ENCODE measurements at regions of chr2 and their contacts with region 1.

Region 1: DNA sequence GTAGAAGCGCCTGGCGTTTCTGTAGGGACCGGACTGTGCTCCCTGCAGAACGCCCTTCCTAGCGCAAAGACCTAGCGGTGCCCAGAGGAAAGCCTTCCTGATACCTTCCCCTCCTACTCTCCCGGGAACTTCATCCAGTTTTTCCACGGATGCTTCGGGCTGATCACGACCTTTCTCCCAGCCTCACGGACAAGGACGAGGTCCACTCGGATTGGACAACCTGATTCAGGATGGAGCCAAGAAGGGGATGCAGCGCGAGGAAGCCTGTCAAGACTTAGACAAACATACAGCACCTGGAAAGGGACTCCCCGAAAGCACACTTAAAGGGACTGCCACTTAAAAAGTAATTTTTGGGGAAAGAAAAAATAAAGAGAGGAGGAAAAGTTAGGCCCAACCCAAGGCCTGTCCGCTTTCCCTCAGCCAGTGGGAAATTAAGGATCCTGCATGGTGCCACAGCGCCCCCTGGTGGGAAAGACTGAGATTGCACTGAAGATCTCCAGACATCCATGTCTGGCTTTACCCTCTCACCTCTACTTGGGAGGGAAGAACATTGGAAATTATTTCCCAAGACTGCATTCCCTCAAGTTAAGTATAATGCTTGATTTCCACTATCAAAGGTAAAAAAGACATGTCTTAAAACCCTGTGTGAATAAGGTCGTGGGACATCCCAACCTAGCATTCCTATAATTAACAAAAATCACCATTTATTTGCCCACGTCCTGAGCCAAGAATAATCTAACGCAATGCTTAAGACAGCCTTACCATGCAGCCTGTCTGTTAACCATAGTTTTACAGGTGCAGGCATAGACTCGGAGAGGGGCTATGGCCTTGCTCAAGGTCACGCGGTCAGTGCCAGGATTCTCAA is 13.4 kb upstream of the COPS8 start:
- H3K4me3 Mint-ChIP-seq: no peak overlapping the region
- H3K27ac Mint-ChIP-seq: no peak overlapping the region
- H3K4me1 Mint-ChIP-seq: peaks cover 6% of the 10 kb centered on the region
- H3K27me3 Mint-ChIP-seq: no peaks in the 10 kb centered on the region

Region 2: DNA sequence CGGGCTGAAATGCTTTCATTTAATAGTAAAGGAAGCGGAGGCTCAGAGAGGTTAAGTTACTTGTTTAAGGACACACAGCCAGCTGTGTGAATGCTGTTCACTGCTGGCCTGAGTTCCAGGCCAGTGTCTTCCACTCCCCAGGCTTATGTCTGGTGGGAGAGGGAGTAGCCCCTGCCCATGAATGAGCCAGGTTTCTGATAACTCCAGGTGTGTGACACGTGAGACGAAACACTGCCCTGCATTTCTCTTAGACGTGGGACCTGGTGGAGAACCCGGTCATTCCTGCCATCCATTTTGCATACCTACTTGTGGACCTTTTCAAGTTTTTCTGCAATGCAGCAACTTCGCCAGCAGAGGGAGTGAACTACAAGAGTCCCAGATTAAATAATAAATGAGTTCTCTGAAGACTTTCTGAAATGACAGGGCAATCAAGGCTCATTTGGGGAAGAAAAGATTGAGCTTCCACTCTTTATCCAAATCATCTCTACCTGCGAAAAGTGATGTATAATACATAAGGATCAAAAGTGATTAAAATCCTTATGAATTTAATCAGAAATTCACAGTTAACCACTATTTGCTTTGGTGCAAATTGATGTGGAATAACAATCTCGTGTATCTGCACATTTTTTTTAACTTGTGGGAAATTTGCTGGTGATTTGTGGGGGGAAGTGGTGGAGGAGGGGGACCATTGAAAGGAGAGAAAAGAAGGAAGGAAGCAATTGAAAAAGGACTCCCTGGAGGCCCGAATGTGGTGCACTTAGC is 728.7 kb before region 1 on chr2:
- intact Hi-C with region 1: loop called (anchors 2 kb)
- H3K4me3 Mint-ChIP-seq: no peak overlapping the region
- H3K27ac Mint-ChIP-seq: no peak overlapping the region
- H3K4me1 Mint-ChIP-seq: peaks cover 7% of the 10 kb centered on the region
- H3K27me3 Mint-ChIP-seq: peaks cover 2% of the 10 kb centered on the region

Region 3: DNA sequence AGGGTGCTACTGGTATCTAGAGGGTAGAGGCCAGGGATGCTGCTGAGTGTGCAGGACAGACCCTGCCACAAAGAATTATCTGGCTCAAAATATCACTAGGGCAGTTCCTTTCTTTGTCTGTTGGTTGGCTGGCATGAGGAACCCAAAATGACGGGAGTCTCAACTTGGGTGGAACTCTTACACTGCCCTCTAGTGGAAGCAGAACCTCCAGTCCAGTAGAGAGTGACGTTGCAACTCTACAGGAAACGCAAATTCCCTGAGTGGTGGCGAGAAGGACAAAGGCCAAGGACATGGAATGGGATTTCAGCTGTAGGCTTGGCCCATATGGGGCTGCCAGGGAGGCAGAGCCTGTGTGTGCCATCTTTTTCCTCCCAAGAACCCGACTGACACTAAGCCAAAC is 60.5 kb after region 1 on chr2:
- intact Hi-C with region 1: no loop called
- H3K4me3 Mint-ChIP-seq: no peak overlapping the region
- H3K27ac Mint-ChIP-seq: no peak overlapping the region
- H3K4me1 Mint-ChIP-seq: no peaks in the 10 kb centered on the region
- H3K27me3 Mint-ChIP-seq: peaks cover 2% of the 10 kb centered on the region